Activated naive CD4-positive, alpha-beta T cell treated with anti-CD3 and anti-CD28 coated beads for 36 hours (primary cell): ENCODE measurements at regions of chr7 and their contacts with region 1.

Region 1: GRCh38 chr7:127413962-127414361 is 21.5 kb upstream of the ZNF800 start:
- DNase-seq: no peak
- H3K4me3 Mint-ChIP-seq: no peak overlapping the region
- H3K27ac Mint-ChIP-seq: no peak overlapping the region
- H3K4me1 Mint-ChIP-seq: peaks cover 54% of the 10 kb centered on the region
- H3K27me3 Mint-ChIP-seq: no peaks in the 10 kb centered on the region

Region 2: DNA sequence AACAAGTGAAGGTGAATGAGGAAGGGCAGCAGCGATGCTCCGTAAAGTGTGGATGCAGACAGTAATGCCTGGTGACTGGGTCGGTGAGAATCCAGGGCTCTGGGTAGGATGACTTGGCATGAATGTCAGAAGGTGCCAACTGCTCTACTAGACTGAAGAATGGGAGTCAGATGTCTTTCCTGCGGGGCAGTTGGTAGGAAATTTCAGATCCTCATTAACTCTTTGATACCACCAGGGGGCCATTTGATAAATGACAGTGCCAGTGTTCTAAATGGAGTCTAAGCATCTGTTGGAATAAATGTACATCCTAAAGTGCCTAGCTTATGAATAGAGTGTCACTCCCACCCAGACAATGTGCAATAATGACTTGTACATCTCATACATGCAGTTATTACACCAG is 623.2 kb before region 1 on chr7:
- CTCF ChIA-PET with region 1: no interaction called
- intact Hi-C with region 1: no loop called
- DNase-seq: no peak
- H3K4me3 Mint-ChIP-seq: no peak overlapping the region
- H3K27ac Mint-ChIP-seq: no peak overlapping the region
- H3K4me1 Mint-ChIP-seq: no peaks in the 10 kb centered on the region
- H3K27me3 Mint-ChIP-seq: no peaks in the 10 kb centered on the region

Region 3: GRCh38 chr7:127375631-127376030 is 38.3 kb before region 1 on chr7:
- CTCF ChIA-PET with region 1: no interaction called
- intact Hi-C with region 1: loop called (anchors 1 kb)
- DNase-seq: no peak
- H3K4me3 Mint-ChIP-seq: no peak overlapping the region
- H3K27ac Mint-ChIP-seq: no peak overlapping the region
- H3K4me1 Mint-ChIP-seq: peaks cover 53% of the 10 kb centered on the region
- H3K27me3 Mint-ChIP-seq: no peaks in the 10 kb centered on the region

Region 4: DNA sequence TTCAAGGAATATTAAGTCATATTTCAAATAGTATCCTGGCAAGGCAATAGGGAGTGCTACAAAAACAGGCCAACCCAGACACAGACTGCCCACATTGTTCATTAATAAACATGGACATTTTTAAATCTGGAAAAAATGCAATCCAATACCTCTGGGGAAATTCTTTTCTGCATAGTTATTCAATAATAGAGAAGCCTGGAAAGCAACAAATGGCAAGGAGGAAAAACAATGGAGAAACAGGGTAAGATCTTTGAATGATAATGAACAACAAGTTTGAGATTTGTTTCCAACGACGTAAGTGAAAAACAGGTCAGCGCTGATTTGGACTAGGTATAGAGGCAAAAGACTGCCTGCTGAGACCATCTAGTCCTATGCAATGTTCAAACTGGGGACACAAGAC is 23.3 kb after region 1 on chr7:
- CTCF ChIA-PET with region 1: no interaction called
- intact Hi-C with region 1: no loop called
- DNase-seq: no peak
- H3K4me3 Mint-ChIP-seq: no peak overlapping the region
- H3K27ac Mint-ChIP-seq: no peak overlapping the region
- H3K4me1 Mint-ChIP-seq: no peaks in the 10 kb centered on the region
- H3K27me3 Mint-ChIP-seq: no peaks in the 10 kb centered on the region

Region 5: GRCh38 chr7:127447326-127447945 is 33.5 kb after region 1 on chr7:
- CTCF ChIA-PET with region 1: no interaction called
- intact Hi-C with region 1: loop called (anchors 2 kb)
- DNase-seq: peak; percentile 52
- H3K4me3 Mint-ChIP-seq: no peak overlapping the region
- H3K27ac Mint-ChIP-seq: no peak overlapping the region
- H3K4me1 Mint-ChIP-seq: peaks cover 15% of the 10 kb centered on the region
- H3K27me3 Mint-ChIP-seq: no peaks in the 10 kb centered on the region

Region 6: DNA sequence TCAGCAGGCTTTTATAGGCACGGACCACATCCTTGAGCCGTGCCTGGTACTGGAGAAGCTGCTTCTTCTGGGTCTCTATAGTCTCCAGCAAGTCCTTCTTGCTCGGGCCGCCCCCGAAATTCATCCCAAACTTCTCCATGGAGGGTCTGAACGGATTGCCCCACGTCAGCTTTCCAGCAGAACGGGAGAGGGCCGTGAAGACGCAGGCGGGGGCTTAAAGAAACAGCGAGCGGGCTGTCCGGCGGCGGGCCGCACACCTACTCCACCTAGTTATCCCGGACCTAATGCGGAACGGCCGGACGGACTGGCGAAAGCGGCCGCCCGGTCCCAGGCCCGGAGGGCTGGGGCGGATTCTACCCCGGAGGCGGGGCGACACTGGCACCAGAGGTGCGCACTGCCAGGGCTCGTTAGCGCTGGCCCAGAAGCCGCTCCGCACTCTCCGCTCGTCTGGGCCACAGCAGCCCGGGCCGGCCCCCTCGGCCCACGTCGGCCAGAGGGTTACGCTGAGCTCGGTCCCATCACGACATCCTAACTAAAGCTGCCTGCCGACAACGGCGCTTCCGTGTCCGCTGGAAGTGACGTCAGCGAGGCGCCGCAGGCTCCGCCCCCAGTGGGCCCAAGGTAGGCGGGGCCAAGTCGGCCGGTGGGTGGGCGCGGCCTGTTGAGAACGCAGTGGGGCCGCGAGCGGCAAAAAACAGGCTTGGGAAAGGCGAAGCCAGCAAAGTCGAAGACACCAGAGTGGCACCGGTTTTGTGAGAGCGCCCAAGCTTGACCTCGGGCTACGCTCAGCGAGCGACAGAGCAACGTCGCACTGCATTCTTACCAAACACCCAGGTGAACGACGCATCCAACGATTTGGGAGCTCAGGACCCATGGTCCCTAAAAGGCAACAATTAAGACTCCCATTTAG is 171.3 kb after region 1 on chr7 and contains the start of gene GCC1:
- CTCF ChIA-PET with region 1: no interaction called
- intact Hi-C with region 1: no loop called
- DNase-seq: peak; percentile 94
- H3K4me3 Mint-ChIP-seq: peak within 1 kb of the TSS; percentile 89
- H3K27ac Mint-ChIP-seq: peak within 1 kb of the TSS; percentile 70
- H3K4me1 Mint-ChIP-seq: peaks cover 66% of the 10 kb centered on the region
- H3K27me3 Mint-ChIP-seq: no peaks in the 10 kb centered on the region
- total RNA-seq, gene GCC1: 11.0 to 12.0 TPM

Region 7: DNA sequence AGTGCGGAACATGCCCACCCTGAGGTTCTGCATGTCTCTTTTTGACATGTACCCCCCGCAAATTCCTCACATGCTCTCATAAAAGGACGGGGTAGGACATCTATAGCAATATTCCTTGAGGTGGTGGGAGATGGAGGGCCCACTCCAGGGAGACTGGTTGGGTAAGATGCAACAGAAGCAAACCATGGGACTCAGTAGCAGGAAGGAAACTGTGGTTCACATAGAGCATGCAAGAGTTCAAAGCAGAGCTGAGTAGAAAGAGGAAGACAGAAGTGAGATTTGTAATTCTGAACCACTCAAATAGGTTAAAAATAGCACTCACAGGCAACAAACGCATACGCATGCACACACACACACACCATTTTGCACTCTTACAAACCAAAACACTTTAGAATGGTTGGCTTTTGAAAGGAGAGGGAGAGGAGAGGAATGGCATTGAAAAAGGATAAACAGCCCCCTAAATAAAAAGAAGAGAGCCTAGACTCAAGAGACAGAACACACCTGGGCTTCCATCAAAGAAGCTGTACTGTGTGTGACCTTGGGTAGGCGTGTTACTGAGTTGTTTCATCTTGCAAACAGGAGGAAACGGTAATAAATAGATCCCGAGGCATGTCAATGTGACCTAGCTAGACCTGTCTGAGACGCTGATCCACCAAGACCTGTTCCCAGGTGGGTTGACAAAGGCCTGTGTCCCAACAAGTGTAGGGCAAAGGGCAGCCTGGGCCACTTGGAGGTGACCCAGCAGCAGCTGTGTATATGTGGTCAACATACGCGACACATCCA is 694.9 kb after region 1 on chr7:
- CTCF ChIA-PET with region 1: no interaction called
- intact Hi-C with region 1: loop called (anchors 5 kb)
- DNase-seq: peak; percentile 45
- H3K4me3 Mint-ChIP-seq: no peak overlapping the region
- H3K27ac Mint-ChIP-seq: peak overlapping the region; percentile 62
- H3K4me1 Mint-ChIP-seq: peaks cover 66% of the 10 kb centered on the region
- H3K27me3 Mint-ChIP-seq: peaks cover under 1% of the 10 kb centered on the region